ENCODE measurements at regions of chr20 and their contacts with region 1.

Region 1: DNA sequence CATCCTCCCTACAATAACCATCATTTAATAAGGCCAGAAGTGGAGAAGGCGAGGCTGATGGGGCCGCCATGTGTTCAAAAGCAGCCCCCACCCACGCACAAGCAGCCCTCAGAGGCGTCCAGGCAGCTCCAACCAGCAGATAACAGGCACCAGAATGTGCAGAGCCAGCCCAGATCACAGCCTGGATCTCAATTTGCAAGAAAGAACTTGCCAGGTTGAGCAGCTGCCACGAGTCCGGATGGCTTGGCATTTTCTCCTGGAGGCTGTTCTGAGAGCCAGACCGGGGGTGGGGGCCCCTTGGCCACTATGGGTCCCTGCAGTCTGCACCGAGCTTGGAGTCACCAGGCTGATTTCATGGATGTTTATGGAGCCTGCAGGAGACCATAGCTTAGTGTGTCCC is 338.1 kb downstream of the PREX1 start:
- DNase-seq: peak; percentile 16 to 95 (median 62)

Region 2: GRCh38 chr20:48298851-48299545 is 190.7 kb before region 1 on chr20:
- intact Hi-C with region 1: no loop called
- DNase-seq: no peak

Region 3: DNA sequence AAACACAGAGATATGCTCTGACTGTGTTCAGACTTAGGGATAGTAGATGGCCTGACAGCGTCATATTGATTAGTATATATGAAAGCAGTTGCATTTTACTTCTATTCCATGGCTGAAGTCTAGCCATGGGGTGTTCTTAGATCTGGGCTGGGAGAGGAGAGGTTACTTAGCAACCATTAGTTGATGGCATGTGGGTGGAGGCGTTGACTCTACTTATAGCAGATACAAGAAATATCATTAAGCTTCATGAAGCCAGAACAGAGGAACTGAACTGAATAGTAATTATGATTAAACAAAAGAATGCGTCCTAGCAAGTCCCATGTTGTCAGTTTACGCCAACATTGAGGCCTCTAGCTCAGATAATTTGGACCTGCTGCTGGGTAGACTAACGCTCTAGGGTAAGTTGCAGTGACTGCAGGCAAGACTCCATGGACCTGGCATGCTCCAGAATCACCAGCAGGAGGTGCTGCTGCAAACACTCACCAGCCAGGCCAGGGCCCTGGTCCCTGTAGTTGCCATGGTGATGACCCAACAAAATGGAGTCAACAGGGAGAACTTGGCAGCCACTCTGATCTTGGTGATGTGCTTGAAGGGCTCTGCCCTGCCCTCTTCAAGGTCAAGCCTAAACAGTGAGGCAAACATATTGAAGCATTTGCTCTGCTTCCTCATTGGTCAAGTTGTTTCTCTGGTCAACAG is 139.2 kb before region 1 on chr20:
- intact Hi-C with region 1: loop called (anchors 10 kb)
- DNase-seq: no peak

Region 4: DNA sequence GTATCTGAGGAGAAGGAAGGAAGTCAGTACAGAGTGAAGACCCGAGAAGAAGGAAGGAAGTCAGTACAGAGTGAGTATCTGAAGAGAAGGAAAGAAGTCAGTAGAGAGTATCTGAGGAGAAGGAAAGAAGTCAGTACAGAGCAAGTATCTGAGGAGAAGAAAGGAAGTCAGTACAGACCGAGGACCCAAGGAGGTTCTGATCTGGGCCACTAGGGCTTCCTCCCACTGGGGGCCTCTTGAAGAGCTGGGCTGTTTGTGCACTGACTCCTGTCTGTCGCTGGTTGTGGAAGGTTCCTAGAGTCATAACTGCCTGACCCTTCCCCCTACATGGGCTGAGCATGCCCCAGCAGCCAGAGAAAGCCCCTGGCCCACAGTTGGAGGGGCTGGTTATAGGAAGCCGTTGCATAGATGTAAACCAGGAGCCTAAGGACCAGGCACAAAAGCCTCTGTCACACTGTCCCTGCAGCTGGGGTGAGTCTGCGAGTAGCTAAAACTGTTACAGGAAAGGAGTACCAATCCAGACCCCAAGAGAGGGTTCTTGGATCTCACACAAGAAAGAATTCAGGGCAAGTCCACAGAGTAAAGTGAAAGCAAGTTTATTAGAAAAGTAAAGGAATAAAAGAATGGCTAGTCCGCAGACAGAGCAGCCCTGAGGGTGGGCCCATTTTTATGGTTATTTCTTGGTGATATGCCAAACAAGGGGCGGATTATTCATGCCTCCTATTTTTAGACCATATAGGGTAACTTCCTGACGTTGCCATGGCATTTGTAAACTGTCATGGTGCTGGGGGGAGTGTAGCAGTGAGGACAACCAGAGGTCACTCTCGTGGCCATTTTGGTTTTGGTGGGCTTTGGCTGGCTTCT is 57.8 kb before region 1 on chr20:
- intact Hi-C with region 1: no loop called
- DNase-seq: no peak

Region 5: DNA sequence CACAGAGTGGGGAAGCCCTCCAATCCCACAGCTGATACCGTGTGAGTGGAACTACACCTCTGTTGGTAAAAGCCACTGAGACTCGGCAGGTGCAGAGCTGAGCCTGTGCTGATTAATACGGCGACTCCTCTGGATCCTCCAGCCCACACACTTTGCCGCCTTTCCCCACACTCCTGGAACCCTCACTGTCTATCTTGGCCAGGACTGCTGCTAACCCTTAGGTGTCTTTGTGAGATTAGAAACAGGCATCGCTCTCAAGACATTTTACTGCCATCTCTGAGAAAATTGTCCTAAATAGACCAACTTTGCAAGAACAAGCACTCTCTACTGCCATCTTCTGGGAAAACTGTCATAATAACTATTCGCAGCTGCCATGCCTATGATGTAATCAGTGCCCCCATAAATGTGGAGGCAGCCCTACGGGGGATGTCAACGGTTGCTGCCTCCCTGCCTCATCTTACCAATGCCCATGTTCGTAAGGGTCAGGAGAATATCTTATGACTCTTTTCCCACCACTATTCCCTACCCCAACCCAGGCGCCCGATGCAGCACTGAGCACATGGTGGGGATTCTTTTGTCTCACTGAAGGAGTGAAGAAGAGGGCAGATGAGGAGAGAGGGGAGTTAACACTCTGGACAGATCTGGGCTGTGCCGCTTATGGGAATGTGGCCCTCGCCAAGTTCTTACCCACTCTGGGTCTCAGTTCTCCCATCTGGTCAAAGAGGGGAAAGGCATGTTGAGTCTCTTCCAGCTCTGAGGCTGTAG is 1019.0 kb after region 1 on chr20:
- intact Hi-C with region 1: no loop called
- DNase-seq: peak in 4 of 10 donors; percentile 18 to 81 (median 57)